Left ventricle myocardium inferior (tissue), 1 donor: ENCODE measurements at regions of chr7 and their contacts with region 1.

Region 1: GRCh38 chr7:80699045-80699638 is 60.7 kb downstream of the CD36 start:
- DNase-seq: no peak
- H3K4me3 ChIP-seq: no peak overlapping the region
- H3K27ac ChIP-seq: no peak overlapping the region
- H3K4me1 ChIP-seq: peaks cover 10% of the 10 kb centered on the region
- H3K27me3 ChIP-seq: no peaks in the 10 kb centered on the region
- CTCF ChIP-seq: peak; percentile 76

Region 2: GRCh38 chr7:80918909-80919662 is 219.9 kb after region 1 on chr7 and contains the start of gene SEMA3C:
- intact Hi-C with region 1: loop called (anchors 10 kb)
- DNase-seq: peak; percentile 90
- H3K4me3 ChIP-seq: peak within 1 kb of the TSS; percentile 74
- H3K27ac ChIP-seq: peak within 1 kb of the TSS; percentile 85
- H3K4me1 ChIP-seq: peaks cover 29% of the 10 kb centered on the region
- H3K27me3 ChIP-seq: peaks cover 23% of the 10 kb centered on the region
- CTCF ChIP-seq: no peak
- total RNA-seq, gene SEMA3C: 66.5 TPM

Region 3: DNA sequence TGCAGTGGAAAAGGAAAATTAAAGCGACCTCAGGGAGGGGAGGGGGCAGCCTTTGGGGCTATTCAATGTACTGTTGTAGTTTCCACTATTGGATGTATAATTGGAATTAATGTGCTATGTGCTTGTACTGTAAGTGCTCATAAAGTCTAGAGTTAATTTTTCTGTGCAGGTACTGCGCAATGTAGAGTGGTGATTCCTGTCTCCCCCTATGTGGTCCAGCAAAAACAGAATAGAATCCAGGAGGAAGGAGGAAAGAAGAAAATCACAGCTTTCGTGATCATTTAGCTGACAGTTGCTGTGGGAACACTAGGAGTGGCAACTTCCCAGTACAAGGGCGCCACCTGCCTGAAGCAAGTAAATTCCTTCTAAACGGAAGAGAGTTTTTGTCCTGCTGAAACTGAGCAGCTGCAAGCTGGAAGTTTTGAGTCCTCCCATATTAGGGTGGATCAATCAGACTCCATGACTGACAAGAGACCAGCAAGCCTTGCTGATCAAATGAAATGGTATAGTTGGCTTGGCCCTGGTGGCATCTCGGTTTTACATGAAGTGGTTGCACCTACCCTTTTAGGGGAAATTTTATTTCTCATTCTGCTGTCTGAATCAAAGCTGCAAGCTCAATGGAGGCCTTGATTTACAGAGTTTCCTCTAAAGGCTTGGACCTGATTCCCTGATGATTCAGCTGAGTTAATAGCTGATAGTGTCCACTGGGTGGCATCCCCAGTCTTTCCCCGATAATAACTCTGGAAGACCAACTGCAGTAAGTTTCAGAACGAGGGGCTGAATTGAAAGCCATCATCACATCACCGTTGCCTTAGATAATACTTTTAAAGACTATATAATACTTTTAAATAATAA is 771.0 kb after region 1 on chr7:
- intact Hi-C with region 1: loop called (anchors 5 kb)
- DNase-seq: peak; percentile 51
- H3K4me3 ChIP-seq: peak overlapping the region; percentile 30
- H3K27ac ChIP-seq: peak overlapping the region; percentile 47
- H3K4me1 ChIP-seq: peaks cover 13% of the 10 kb centered on the region
- H3K27me3 ChIP-seq: no peaks in the 10 kb centered on the region
- CTCF ChIP-seq: peak; percentile 73